Activated CD8-positive, alpha-beta T cell treated with anti-CD3 and anti-CD28 coated beads, Interleukin-2, amount 10 ng/mL, durations not matched to agents 7 days and 5 days (primary cell): ENCODE measurements at regions of chr1 and their contacts with region 1.

Region 1: GRCh38 chr1:19485362-19486187 is at the start of gene CAPZB:
- DNase-seq: peak; percentile 95
- ATAC-seq: peak; percentile 91
- H3K4me3 Mint-ChIP-seq: peak within 1 kb of the TSS; percentile 95
- H3K27ac Mint-ChIP-seq: peak within 1 kb of the TSS; percentile 94
- H3K4me1 Mint-ChIP-seq: peaks cover 55% of the 10 kb centered on the region
- H3K27me3 Mint-ChIP-seq: no peaks in the 10 kb centered on the region
- total RNA-seq, gene CAPZB: 492 to 518 TPM

Region 2: GRCh38 chr1:19333587-19334354 is 151.8 kb before region 1 on chr1:
- CTCF ChIA-PET with region 1: no interaction called
- POLR2A ChIA-PET with region 1: no interaction called
- DNase-seq: no peak
- ATAC-seq: no peak
- H3K4me3 Mint-ChIP-seq: no peak overlapping the region
- H3K27ac Mint-ChIP-seq: no peak overlapping the region
- H3K4me1 Mint-ChIP-seq: peaks cover 1% of the 10 kb centered on the region
- H3K27me3 Mint-ChIP-seq: no peaks in the 10 kb centered on the region

Region 3: DNA sequence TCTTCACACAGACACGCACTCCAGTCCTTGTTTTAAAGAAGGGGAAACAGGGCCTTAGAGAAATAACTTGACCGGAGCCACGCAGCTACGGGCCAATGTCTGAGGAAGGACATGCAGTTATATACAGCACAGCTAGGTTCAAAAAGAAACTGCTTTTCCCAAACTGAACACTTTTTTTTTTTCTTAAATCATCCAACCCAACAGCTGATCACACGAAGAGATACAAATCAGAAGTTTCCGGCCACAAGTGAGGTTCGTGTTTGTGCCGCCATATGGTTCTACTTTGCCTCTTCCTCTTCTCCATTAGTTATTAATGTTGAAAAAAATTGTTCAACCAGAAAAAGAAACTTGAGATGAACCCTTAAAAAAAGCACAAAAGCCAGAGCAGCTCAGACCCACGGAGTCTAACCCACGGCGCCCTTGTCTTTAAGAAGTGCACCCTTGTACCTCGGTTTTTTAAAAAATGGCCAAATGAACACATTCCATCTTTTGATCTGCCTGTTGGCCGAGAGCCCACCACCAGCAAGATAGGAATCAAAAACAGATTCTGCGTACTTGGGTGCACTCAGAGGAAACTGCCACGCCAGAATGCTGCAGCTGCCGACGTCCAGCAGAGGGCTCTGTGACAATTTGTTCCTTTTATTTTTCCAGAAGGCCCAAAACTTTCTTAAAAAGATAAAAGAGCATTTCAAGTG is 94.5 kb before region 1 on chr1:
- CTCF ChIA-PET with region 1: interaction called, 13 read pairs
- POLR2A ChIA-PET with region 1: interaction called, 4 read pairs
- DNase-seq: peak; percentile 79
- ATAC-seq: peak; percentile 77
- H3K4me3 Mint-ChIP-seq: peak overlapping the region; percentile 79
- H3K27ac Mint-ChIP-seq: peak overlapping the region; percentile 95
- H3K4me1 Mint-ChIP-seq: peaks cover 76% of the 10 kb centered on the region
- H3K27me3 Mint-ChIP-seq: no peaks in the 10 kb centered on the region

Region 4: GRCh38 chr1:19468397-19468956 is 17.1 kb before region 1 on chr1:
- CTCF ChIA-PET with region 1: interaction called, 10 read pairs
- POLR2A ChIA-PET with region 1: interaction called, 194 read pairs
- DNase-seq: peak; percentile 81
- ATAC-seq: peak; percentile 81
- H3K4me3 Mint-ChIP-seq: peak overlapping the region; percentile 51
- H3K27ac Mint-ChIP-seq: peak overlapping the region; percentile 83
- H3K4me1 Mint-ChIP-seq: peaks cover 90% of the 10 kb centered on the region
- H3K27me3 Mint-ChIP-seq: no peaks in the 10 kb centered on the region

Region 5: DNA sequence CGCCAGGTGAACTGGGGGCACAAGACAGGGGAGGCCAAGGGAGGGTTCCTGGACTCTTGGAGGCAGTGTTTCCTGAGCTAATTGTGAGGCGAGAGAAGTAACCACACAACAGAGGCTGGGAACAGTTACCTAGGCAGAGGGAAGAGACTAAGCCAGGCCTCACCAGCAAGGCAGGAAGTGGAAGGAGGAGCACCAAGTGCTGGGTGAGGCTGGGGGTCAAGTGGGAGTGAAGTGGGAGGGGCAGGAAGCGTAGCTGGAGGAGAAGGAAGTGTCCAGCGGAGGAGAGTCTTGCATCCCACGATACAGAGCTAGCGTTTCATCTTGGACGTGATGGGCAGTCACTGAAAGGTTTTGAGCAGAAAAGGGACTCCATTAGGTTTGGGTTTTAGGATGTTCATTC is 48.1 kb after region 1 on chr1:
- CTCF ChIA-PET with region 1: no interaction called
- POLR2A ChIA-PET with region 1: no interaction called
- DNase-seq: no peak
- ATAC-seq: no peak
- H3K4me3 Mint-ChIP-seq: no peak overlapping the region
- H3K27ac Mint-ChIP-seq: no peak overlapping the region
- H3K4me1 Mint-ChIP-seq: no peaks in the 10 kb centered on the region
- H3K27me3 Mint-ChIP-seq: no peaks in the 10 kb centered on the region

Region 6: GRCh38 chr1:19596714-19597495 is 111.3 kb after region 1 on chr1:
- CTCF ChIA-PET with region 1: interaction called, 4 read pairs
- POLR2A ChIA-PET with region 1: interaction called, 11 read pairs
- DNase-seq: peak; percentile 99
- ATAC-seq: peak; percentile 84
- H3K4me3 Mint-ChIP-seq: peak overlapping the region; percentile 91
- H3K27ac Mint-ChIP-seq: peak overlapping the region; percentile 98
- H3K4me1 Mint-ChIP-seq: peaks cover 41% of the 10 kb centered on the region
- H3K27me3 Mint-ChIP-seq: no peaks in the 10 kb centered on the region

Region 7: DNA sequence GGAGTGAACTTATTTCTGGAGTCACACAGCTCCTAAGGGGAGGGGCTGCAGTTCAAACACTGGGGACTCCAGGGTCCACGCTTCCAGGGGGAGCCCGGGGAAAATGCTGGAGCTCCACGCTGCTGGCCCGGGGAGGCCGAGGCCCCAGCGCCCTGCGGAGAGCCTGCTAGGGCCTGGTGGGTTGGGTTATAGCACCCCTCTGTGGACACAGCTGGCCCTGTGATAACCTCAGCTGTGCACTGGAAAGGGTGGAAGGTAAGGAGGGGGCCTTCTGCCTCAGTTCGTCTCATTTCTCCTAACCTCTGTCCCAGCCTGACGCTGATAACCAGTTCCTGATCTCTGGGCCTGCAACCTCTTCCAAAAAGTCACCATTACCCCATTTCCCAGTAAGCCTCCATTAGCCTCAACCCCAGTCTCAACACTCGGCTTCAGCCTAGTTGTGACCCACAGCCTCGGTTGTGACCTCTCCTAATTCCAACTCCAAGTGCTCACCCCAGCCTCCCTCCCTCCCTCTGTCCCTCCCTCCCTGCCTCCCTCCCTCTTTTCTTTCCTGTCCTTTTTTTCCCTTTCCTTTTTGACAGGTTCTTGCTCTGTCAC is 165.7 kb after region 1 on chr1:
- CTCF ChIA-PET with region 1: interaction called, 19 read pairs
- POLR2A ChIA-PET with region 1: interaction called, 3 read pairs
- DNase-seq: peak; percentile 59
- ATAC-seq: peak; percentile 59
- H3K4me3 Mint-ChIP-seq: no peak overlapping the region
- H3K27ac Mint-ChIP-seq: peak overlapping the region; percentile 22
- H3K4me1 Mint-ChIP-seq: peaks cover 26% of the 10 kb centered on the region
- H3K27me3 Mint-ChIP-seq: no peaks in the 10 kb centered on the region